OCI-LY7 (cell line): ENCODE measurements at regions of chr1 and their contacts with region 1.

Region 1: GRCh38 chr1:156659994-156660751 is 17.0 kb downstream of the NES start:
- DNase-seq: peak; percentile 96
- H3K4me3 ChIP-seq: no peak overlapping the region
- H3K27ac ChIP-seq: no peak overlapping the region
- H3K4me1 ChIP-seq: peaks cover 62% of the 10 kb centered on the region
- CTCF ChIP-seq: peak; percentile 99

Region 2: DNA sequence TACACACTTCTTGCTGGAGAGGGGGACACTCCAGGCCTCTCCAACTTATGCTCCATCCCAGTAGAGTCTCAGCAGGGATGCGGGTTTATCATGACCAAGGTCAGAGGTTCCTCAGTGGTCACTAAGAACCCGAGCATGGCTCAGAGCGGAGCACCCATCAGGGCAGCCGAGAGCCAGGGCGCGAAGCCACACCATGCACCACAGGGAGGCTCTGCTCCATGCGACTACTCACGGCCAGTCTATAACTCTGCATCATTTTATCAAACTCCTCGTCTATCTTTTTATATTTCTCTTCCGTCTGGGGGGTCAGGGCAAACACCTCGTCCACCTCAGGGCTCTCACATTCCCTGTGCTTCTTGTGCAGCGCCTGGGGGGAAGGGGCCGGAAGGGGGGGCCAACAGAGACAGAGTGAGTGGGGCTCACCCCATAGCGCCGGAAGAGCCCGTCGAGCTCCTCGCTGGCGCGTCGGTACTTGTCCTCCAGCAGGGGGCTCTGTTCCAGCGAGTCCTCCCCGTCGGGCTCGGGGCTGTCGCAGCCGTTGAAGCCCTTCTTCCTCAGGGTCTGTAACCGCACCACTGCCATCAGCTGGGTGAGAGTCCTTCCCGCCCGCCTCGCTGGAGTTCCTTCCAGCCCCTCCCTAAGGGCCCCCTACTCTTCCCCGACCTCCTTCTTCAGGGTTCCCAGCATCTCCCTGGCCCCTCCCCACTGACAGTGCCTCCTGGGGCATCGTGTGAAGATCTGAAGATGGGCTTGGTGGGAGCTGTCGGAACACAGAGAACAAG is 179.6 kb before region 1 on chr1:
- CTCF ChIA-PET with region 1: no interaction called
- POLR2A ChIA-PET with region 1: interaction called, 11 read pairs
- intact Hi-C with region 1: no loop called
- DNase-seq: peak; percentile 90
- H3K4me3 ChIP-seq: peak overlapping the region; percentile 6
- H3K27ac ChIP-seq: peak overlapping the region; percentile 61
- H3K4me1 ChIP-seq: peaks cover 56% of the 10 kb centered on the region
- CTCF ChIP-seq: peak; percentile 89

Region 3: GRCh38 chr1:156601122-156601830 is 58.9 kb before region 1 on chr1 and contains the start of gene GPATCH4:
- CTCF ChIA-PET with region 1: interaction called, 11 read pairs
- POLR2A ChIA-PET with region 1: no interaction called
- intact Hi-C with region 1: no loop called
- DNase-seq: peak; percentile 86
- H3K4me3 ChIP-seq: peak within 1 kb of the TSS; percentile 78
- H3K27ac ChIP-seq: peak within 1 kb of the TSS; percentile 69
- H3K4me1 ChIP-seq: peaks cover 26% of the 10 kb centered on the region
- CTCF ChIP-seq: no peak
- total RNA-seq, gene GPATCH4: 33.3 and 40.9 TPM in 2 replicates

Region 4: GRCh38 chr1:156625436-156626078 is 34.6 kb before region 1 on chr1:
- CTCF ChIA-PET with region 1: interaction called, 12 read pairs
- POLR2A ChIA-PET with region 1: interaction called, 6 read pairs
- intact Hi-C with region 1: loop called (anchors 1 kb)
- DNase-seq: peak; percentile 68
- H3K4me3 ChIP-seq: no peak overlapping the region
- H3K27ac ChIP-seq: no peak overlapping the region
- H3K4me1 ChIP-seq: peaks cover 23% of the 10 kb centered on the region
- CTCF ChIP-seq: peak; percentile 93

Region 5: GRCh38 chr1:156677616-156678596 is 17.7 kb after region 1 on chr1:
- CTCF ChIA-PET with region 1: interaction called, 6 read pairs
- POLR2A ChIA-PET with region 1: interaction called, 3 read pairs
- intact Hi-C with region 1: loop called (anchors 1 kb)
- DNase-seq: peak; percentile 56
- H3K4me3 ChIP-seq: no peak overlapping the region
- H3K27ac ChIP-seq: no peak overlapping the region
- H3K4me1 ChIP-seq: no peaks in the 10 kb centered on the region
- CTCF ChIP-seq: peak; percentile 97

Region 6: GRCh38 chr1:157181258-157181657 is 521.1 kb after region 1 on chr1:
- CTCF ChIA-PET with region 1: no interaction called
- POLR2A ChIA-PET with region 1: no interaction called
- intact Hi-C with region 1: no loop called
- DNase-seq: peak; percentile 55
- H3K4me3 ChIP-seq: no peak overlapping the region
- H3K27ac ChIP-seq: no peak overlapping the region
- H3K4me1 ChIP-seq: peaks cover 24% of the 10 kb centered on the region
- CTCF ChIP-seq: no peak